ENCODE measurements at regions of chr1 and their contacts with region 1.

Region 1: DNA sequence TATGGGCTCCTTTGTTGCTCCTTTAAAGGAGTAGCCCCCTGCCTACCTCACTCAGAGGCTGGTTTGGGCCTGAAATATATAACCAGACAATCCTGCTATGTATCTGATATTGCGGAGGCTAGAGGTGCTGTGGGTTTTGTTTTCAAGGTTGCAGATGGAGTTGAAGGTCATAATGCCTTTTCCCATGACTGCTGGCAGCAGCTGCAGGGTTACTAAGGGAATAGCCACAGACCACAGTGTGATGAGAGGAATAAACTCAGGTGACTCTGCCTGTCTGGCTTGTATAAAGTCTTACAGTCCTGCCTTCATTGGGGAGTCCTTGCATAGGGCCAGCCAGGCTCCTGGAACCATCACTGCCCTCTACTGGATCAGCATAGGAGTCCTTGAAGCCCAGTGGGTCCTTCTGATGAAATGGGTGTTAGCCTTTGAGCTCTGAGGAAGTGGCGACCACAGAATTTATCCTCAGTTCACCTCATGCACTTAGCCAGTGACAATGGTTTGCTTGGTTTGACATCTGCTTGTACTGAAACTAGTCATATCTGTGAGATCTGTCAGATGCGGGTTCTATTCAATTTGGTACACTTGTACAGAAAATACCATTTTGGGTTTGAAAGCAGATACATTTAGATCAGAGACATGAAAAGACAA is 174.4 kb upstream of the HMCN1 start:
- DNase-seq: peak; percentile 74
- H3K4me3 Mint-ChIP-seq: peak overlapping the region; percentile 52
- H3K27ac Mint-ChIP-seq: peak overlapping the region; percentile 66
- H3K4me1 Mint-ChIP-seq: peaks cover 52% of the 10 kb centered on the region
- H3K27me3 Mint-ChIP-seq: no peaks in the 10 kb centered on the region

Region 2: DNA sequence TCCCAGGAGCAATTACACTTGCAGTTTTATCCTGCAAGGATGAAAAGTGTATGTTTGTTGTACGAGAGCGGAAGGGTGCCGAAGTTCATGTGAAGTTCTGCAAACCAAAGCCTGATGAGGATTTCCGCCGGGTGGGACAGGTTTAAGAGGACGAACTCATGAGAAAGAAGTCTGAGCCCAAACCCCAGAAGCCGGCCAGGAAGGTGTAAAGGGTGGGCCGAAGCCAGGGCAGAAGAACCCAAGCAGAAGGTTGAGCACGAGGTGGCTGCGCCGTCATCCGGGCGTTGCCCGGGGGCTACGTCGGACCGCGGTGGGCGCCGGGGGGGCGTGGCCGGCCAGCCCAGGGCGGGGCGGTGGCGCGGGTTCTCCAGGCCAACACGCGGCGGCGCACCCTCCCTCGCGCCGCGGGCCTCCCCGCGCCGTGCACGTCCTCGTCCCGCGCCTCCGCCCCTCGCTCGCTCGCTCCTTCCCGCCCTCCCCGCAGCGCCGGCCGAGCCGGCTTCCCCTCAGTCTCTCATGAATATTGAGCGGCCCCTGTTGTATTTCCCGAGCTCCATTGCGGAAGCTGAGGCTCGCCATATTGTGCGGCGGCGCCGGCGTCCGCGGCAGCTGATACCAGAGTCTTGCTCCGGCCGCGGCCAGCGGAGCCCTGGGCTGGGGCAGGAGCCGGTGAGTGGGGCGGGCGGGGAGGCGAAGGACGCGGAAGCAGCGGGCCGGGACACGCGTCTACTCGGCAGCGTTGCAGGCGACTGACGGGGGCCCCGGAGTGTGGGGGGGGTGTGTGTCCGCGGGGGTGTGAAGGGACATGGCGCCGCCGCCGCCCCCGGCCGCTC is 514.6 kb before region 1 on chr1 and contains the start of gene RNF2:
- intact Hi-C with region 1: loop called (anchors 5 kb)
- DNase-seq: peak; percentile 65
- H3K4me3 Mint-ChIP-seq: peak within 1 kb of the TSS; percentile 89
- H3K27ac Mint-ChIP-seq: peak within 1 kb of the TSS; percentile 82
- H3K4me1 Mint-ChIP-seq: peaks cover 29% of the 10 kb centered on the region
- H3K27me3 Mint-ChIP-seq: peaks cover 15% of the 10 kb centered on the region
- total RNA-seq, gene RNF2: 24.1 and 24.4 TPM in 2 replicates

Region 3: DNA sequence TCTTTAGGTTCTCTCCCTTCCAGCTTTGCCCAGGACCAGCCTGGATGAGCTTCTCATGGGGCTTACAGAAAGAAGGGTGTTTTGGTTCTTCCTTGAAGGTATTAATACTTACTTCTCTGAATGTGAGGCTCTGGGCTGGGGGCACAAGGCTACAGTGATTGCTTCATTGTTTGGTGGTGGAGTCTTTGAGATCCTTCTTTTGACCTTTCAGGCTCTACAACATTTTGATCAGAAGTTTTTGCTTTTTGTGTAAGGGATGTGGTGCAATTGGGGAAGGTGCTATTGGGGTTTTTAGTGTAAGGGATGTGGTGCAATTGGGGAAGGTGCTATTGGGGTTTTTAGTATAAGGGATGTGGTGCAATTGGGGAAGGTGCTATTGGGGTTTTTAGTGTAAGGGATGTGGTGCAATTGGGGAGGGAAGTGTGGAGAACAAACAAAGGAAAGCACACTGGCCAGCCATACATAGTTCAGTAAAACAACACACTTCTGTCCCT is 139.2 kb before region 1 on chr1:
- intact Hi-C with region 1: loop called (anchors 1 kb)
- DNase-seq: peak; percentile 49
- H3K4me3 Mint-ChIP-seq: peak overlapping the region; percentile 17
- H3K27ac Mint-ChIP-seq: peak overlapping the region; percentile 77
- H3K4me1 Mint-ChIP-seq: peaks cover 76% of the 10 kb centered on the region
- H3K27me3 Mint-ChIP-seq: no peaks in the 10 kb centered on the region

Region 4: DNA sequence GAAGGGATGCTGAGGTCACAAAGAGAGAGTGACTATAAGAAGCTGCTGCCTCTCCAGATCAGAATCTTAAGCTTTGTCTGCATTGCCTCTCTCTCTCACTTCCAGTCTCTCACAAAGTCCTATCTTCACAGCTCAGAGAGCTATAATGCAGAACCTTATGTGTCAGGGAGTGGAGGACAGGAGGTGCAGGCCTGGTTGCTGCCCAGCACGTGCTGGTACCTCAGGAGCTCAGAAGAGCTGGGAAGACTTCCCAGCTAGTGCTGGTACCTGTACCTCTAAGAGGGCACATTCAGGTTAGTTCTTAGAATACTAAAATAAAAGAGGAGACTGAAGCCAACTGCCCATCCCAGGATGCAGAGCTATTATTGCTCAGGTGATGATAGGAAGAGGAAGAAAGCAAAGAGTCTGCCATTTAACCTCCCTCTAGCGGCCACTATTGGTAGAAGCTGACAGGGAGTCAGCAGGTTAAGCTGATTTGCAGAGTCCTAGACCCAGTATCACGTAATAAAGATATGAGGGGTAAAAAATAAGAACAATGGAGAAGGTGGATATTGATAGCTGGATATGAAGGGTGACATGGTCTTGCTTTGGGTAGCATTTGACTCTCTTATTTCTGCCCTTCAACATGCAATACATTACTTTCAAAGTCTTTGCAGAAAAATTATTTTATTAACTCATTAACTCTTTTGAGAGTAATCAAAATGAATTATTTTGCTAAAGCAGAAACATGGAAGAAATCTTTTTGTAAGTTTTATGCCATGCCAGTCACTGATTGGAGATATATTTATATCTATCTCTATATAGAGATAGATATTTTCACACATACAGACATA is 36.2 kb after region 1 on chr1:
- intact Hi-C with region 1: loop called (anchors 5 kb)
- DNase-seq: peak; percentile 26
- H3K4me3 Mint-ChIP-seq: no peak overlapping the region
- H3K27ac Mint-ChIP-seq: peak overlapping the region; percentile 42
- H3K4me1 Mint-ChIP-seq: peaks cover 26% of the 10 kb centered on the region
- H3K27me3 Mint-ChIP-seq: no peaks in the 10 kb centered on the region

Region 5: DNA sequence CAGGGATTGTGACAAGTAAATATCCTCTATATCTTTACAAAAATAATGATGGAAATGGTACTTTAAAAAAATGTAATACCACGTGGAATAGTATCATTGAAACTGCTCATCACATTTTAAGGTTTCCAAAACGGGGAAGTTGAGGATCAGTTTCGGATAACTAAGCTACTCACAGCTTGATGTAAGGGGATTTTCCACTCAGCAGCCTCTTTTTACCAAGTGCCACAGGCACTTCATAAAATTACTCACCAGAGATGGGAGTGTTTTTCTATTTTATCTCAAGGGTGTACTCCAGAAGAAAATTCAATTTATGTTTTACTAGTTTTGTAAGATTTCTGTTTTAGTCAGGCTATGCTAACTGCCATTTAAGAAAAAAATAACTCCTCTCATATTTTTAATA is 723.6 kb after region 1 on chr1:
- intact Hi-C with region 1: loop called (anchors 5 kb)
- DNase-seq: no peak
- H3K4me3 Mint-ChIP-seq: peak overlapping the region; percentile 72
- H3K27ac Mint-ChIP-seq: peak overlapping the region; percentile 92
- H3K4me1 Mint-ChIP-seq: peaks cover 63% of the 10 kb centered on the region
- H3K27me3 Mint-ChIP-seq: no peaks in the 10 kb centered on the region

Measured in activated T-helper 1 cell treated with anti-CD3 and anti-CD28 coated beads, Interleukin-12 subunit alpha, Interleukin-12 subunit beta, Interleukin-2, Interleukin-4 antibody, amounts not matched to agents 30 ng/mL and 10 ng/mL and 1 ng/mL, durations not matched to agents 14 hours and 24 hours and 36 hours (primary cell).